Psoas muscle (tissue), 8 donors: ENCODE measurements at regions of chr2 and their contacts with region 1.

Region 1: GRCh38 chr2:210617732-210618330 is 61.4 kb downstream of the CPS1 start:
- DNase-seq: no peak
- ATAC-seq: peak in 2 of 4 donors; percentile 67 to 72
- H3K4me3 ChIP-seq: no peak overlapping the region
- H3K27ac ChIP-seq: no peak overlapping the region
- H3K4me1 ChIP-seq: no peaks in the 10 kb centered on the region
- H3K27me3 ChIP-seq: no peaks in the 10 kb centered on the region
- CTCF ChIP-seq: peak; percentile 59

Region 2: DNA sequence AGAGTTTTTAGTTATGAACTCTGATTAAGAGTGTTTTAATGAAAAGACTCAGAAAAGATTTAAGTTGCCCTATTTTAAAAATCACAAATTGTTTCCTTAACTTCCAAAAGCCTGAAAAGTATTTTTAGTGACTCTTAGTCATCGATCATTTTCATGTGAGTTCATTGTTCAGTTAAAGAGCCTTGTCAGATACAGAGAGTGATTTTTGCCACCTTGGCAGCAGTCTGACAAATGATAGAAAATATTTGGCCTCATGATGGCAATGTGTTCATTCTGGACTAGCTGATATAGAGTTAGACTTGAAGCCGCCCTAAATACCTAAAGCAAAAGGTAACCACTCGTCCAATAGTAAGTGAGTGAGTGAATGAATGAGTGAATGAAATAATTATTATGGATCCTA is 164.4 kb after region 1 on chr2:
- intact Hi-C with region 1: no loop called
- DNase-seq: no peak
- ATAC-seq: no peak
- H3K4me3 ChIP-seq: no peak overlapping the region
- H3K27ac ChIP-seq: no peak overlapping the region
- H3K4me1 ChIP-seq: no peaks in the 10 kb centered on the region
- H3K27me3 ChIP-seq: no peaks in the 10 kb centered on the region
- CTCF ChIP-seq: no peak

Region 3: DNA sequence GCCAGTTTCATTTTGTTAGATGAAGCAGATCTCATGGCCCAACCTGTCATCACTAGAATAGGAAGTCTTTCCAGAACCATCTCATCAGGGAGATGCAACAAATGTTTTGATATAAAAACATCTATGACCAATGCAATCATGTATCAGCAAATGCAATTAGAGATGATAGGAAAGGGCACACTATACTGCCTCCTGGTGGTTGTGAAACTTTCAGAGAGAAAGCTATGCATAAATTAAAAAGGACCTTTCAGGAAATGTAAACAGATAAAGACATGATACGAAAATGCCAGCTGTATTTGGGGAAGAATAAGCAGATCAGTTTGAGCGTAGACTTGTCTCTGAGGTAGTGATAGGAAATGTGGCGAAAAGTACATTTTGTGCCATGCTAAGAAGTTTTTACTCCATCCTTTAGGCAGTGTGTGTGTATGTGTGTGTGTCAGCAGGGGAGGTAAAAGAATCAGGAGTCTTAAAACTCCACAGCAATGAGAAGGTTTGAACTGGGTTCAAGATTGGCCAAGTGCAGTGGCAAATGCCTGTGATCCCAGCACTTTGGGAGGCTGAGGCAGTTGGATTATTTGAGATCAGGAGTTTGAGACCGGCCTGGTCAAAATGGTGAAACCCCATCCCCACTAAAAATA is 417.8 kb after region 1 on chr2:
- intact Hi-C with region 1: loop called (anchors 5 to 10 kb)
- DNase-seq: no peak
- ATAC-seq: peak in 1 of 4 donors; percentile 42
- H3K4me3 ChIP-seq: no peak overlapping the region
- H3K27ac ChIP-seq: no peak overlapping the region
- H3K4me1 ChIP-seq: no peaks in the 10 kb centered on the region
- H3K27me3 ChIP-seq: no peaks in the 10 kb centered on the region
- CTCF ChIP-seq: peak; percentile 54

Region 4: GRCh38 chr2:211157856-211158463 is 540.1 kb after region 1 on chr2:
- intact Hi-C with region 1: loop called (anchors 10 kb)
- DNase-seq: peak; percentile 62 to 76
- ATAC-seq: peak in 3 of 4 donors; percentile 64 to 85 (median 75)
- H3K4me3 ChIP-seq: no peak overlapping the region
- H3K27ac ChIP-seq: no peak overlapping the region
- H3K4me1 ChIP-seq: no peaks in the 10 kb centered on the region
- H3K27me3 ChIP-seq: no peaks in the 10 kb centered on the region
- CTCF ChIP-seq: peak; percentile 90